MCF 10A (cell line): ENCODE measurements at regions of chr17 and their contacts with region 1.

Region 1: DNA sequence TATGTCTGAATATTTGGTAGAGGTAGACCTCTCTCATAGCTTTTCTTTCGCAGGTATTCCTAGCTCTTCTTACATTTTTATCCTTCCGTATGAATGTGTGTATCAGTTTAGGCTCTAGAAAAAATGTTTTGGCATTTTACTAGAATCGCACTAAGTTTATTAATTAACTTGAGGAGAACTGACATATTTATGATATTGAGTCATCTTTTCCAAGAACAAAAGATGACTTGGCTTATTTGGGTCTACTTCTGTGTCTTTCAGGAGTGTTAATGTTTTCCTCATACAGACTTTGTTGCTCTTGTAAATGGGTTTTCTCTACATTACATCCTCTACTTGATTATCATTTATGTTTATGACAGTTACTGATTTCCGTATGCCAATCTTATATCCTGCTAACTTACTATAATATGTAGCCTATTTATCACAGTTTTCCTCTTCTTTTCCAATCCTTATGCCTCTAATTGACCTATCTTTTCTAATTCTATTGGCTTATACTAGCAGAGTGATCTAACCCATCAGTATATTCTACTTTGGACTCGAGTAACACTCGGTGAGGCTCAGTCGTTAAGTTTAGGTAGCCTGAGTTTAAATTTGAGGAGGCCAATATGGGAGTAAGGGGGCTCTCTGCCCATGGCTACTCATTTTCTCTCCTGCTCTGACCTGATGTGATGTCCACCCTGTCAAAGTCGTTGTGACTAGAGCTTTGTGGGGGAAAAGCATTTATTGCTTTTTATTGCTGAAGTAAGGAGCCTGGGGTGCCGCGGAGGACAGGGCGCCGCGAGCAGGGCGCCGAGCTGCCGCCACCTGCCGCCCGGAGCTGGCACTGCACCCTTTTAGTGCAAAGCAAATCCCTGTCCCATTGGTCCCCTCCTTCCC is 20.0 kb downstream of the ST6GALNAC1 start:
- DNase-seq: peak; percentile 65
- H3K4me3 Mint-ChIP-seq: no peak overlapping the region
- H3K27ac Mint-ChIP-seq: no peak overlapping the region
- H3K4me1 Mint-ChIP-seq: peaks cover 14% of the 10 kb centered on the region
- H3K27me3 Mint-ChIP-seq: no peaks in the 10 kb centered on the region
- CTCF ChIP-seq: peak; percentile 92

Region 2: GRCh38 chr17:76547184-76547641 is 76.3 kb before region 1 on chr17:
- CTCF ChIA-PET with region 1: interaction called, 5 read pairs
- POLR2A ChIA-PET with region 1: interaction called, 11 read pairs
- intact Hi-C with region 1: no loop called
- DNase-seq: peak; percentile 81
- H3K4me3 Mint-ChIP-seq: no peak overlapping the region
- H3K27ac Mint-ChIP-seq: no peak overlapping the region
- H3K4me1 Mint-ChIP-seq: peaks cover 10% of the 10 kb centered on the region
- H3K27me3 Mint-ChIP-seq: peaks cover 12% of the 10 kb centered on the region
- CTCF ChIP-seq: peak; percentile 51

Region 3: DNA sequence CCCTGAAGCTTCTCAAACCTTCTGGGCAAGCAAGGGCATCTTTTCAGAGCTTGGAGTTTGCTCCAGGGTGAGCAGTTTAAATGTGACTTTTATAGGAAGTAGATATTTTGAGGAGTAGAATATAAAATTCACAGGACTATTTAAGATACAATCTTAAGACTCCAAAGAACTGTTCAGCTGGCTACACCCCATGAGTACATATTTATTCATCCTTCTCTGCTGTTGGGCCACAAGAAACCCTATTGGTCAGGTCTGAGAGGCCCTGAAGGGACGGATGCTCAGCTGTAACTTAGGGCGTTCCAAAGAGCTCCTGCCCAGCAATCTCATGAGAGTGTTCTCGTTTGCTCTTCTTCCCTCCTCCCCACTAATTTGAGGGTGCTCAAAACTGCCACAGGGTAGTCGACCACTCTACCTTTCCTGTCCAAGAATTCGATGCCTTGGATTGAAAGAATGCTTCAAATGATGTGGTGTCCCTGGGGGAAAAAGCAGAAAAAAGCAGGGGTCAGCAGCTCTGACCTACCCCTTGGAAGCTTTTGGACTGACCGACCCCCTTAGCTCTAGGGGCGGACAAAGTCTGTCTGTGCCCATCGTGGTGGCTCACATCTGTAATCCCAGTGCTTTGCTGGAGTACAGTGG is 45.0 kb before region 1 on chr17:
- CTCF ChIA-PET with region 1: interaction called, 14 read pairs
- POLR2A ChIA-PET with region 1: interaction called, 5 read pairs
- intact Hi-C with region 1: no loop called
- DNase-seq: no peak
- H3K4me3 Mint-ChIP-seq: no peak overlapping the region
- H3K27ac Mint-ChIP-seq: no peak overlapping the region
- H3K4me1 Mint-ChIP-seq: peaks cover 14% of the 10 kb centered on the region
- H3K27me3 Mint-ChIP-seq: no peaks in the 10 kb centered on the region
- CTCF ChIP-seq: no peak

Region 4: DNA sequence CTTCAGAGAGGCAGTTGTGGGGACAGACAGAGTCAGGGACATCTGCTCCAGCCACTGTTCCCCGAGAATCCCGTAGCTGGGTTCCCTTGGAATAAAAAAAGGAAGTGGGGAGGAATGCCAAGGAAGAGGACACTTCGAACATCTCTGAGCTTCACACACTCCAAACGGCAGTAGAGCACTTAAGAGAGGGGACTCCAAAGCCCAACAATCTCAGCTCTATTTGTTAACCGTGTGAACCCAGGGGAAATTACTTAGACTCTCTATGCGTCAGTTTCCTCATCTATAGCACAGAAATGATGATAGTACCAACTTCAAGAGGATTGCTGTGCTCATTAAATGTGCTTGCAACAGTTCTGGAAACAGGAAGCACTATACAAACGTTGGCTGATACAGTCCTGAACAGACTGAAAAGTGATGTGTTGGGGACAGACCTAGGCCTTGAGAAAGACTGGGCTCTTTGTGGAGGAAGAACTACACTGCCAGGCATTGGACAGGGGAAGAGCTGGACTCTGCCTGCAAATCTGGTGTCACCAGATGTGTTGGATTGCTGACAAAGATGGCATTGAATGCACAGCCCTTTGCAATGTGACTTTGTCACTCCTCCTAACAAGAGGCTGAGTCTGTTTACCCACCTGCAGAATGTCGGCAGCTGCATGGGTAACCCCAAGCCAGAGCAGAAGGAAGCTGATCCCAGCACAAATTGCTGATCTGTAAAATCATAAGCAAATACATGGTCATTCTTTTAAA is 25.6 kb before region 1 on chr17:
- CTCF ChIA-PET with region 1: interaction called, 26 read pairs
- POLR2A ChIA-PET with region 1: interaction called, 9 read pairs
- intact Hi-C with region 1: no loop called
- DNase-seq: no peak
- H3K4me3 Mint-ChIP-seq: no peak overlapping the region
- H3K27ac Mint-ChIP-seq: peak overlapping the region; percentile 16
- H3K4me1 Mint-ChIP-seq: peaks cover 20% of the 10 kb centered on the region
- H3K27me3 Mint-ChIP-seq: no peaks in the 10 kb centered on the region
- CTCF ChIP-seq: no peak

Region 5: DNA sequence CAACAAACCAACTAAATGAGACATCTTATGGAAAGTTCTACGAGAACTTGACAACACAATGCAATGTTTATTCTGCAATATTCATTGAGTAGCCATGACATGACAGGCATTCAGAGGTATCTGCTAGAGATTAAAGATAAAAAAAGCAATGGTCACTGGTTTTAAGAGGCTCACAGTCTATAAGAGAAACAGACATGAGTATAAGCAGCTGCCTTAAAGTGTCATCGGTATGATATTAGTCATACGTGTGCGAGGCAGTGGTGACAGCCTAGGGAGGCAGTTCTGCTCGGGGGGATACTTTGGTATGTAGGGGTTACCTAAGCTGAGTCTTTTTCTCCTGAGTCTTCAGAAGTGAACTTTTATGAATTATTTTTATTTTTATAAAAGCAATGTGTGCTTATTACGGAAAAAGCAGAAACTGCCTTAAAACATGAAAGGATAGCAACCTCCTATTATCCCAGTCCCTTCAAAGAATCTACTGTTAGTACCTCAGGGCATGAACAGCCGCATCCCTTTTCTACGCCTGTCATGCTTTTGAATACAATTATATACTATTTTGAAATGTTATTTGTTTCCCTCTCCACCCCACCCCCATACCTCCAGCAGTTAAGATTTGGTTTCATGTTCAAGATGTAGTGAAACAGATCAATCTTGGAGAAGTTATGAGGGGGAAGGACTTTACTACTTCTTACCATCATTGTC is 12.3 kb after region 1 on chr17:
- CTCF ChIA-PET with region 1: interaction called, 11 read pairs
- POLR2A ChIA-PET with region 1: interaction called, 3 read pairs
- intact Hi-C with region 1: no loop called
- DNase-seq: no peak
- H3K4me3 Mint-ChIP-seq: no peak overlapping the region
- H3K27ac Mint-ChIP-seq: no peak overlapping the region
- H3K4me1 Mint-ChIP-seq: peaks cover 1% of the 10 kb centered on the region
- H3K27me3 Mint-ChIP-seq: no peaks in the 10 kb centered on the region
- CTCF ChIP-seq: no peak